HEK293 (cell line): ENCODE measurements at regions of chr11 and their contacts with region 1.

Region 1: DNA sequence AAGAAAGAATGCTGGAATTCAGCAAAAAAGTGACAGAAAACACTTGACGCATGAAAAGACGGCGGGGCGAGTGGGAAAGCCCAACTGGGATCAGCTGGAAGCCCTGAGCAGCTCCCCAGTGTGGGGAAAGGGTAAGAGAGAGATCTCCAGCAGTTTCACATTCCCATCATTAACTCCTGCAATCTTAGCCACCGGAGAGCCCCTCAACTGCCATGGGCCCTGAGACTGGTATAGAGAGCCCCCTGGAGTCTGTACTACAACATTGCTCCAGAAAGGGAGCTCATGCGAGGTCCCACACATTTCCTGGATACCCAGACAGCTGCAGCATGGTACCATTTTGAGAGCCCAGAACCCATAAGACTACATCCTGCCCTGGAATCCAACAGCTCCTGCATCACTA is 31.1 kb downstream of the MRGPRX4 start:
- H3K4me3 ChIP-seq: no peak overlapping the region
- H3K27ac ChIP-seq: no peak overlapping the region
- H3K4me1 ChIP-seq: no peaks in the 10 kb centered on the region
- CTCF ChIP-seq: no peak

Region 2: DNA sequence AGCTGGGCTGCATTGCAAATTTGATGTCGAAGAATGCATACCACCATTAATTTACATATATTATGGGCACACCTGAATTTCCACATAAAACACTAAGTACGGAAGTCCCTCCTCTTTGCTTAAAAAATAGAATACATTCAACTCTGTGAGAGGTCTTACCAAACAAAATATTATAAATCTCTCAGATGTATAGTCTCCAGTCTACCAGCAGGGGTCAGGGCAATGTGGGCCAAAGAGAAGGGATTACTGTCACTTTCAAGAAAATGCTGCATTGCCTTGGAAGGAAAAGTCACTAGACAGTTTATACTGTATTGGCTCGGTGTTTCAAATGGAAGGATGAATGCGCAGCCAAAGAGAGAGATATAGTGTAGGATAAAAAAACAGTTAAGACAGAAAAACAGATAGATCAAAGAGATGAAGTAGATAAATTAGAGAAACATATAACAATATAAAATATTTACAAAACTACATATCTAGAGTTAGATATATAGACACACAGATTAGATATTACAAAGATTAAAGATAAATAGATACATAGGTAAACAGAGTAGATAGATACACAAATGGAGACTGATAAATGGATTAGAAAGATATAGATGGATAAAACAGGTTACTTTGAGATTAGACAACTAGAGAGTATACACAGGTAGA is 211.8 kb before region 1 on chr11:
- CTCF ChIA-PET with region 1: interaction called, 12 read pairs
- POLR2A ChIA-PET with region 1: no interaction called
- H3K4me3 ChIP-seq: no peak overlapping the region
- H3K27ac ChIP-seq: no peak overlapping the region
- H3K4me1 ChIP-seq: no peaks in the 10 kb centered on the region
- CTCF ChIP-seq: 0 out of 2 replicates have a peak, but pooled peaks have one; percentile 27

Region 3: DNA sequence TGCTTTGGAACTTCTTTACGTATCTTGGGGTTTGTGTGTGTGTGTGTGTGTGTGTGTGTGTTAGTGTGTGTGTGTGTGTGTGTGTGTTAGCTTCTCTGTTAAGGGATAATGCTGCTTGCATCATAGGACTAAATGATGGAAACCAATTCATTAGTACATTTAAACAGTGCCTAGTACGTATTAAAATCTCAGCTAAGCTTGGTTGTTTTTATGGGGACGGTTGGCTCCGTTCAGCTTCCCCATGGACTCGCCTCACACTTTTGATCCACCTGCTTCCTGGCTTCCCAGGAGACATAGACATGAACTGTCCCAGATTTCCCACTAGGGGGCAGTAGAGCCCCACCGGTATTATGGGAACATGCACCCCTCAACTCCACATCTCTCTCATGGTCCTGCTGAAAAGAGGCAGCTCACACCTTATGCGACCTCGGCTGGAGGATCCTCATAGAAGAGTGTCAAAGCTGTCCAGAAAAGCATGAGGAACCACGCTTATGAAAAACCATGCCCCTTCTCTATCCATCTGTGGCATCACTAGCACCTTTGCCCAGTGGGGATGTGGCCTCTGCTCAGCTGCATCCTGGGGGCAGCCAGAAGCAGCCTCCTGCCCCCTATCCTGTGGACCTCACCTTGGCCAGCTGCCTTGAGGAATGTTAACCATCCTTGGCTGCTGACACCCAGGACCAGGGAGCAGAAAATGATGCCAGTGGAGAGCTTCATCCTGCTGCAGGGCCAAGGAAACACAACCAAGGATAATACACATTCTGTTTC is 88.2 kb before region 1 on chr11:
- CTCF ChIA-PET with region 1: interaction called, 21 read pairs
- POLR2A ChIA-PET with region 1: no interaction called
- H3K4me3 ChIP-seq: no peak overlapping the region
- H3K27ac ChIP-seq: no peak overlapping the region
- H3K4me1 ChIP-seq: no peaks in the 10 kb centered on the region
- CTCF ChIP-seq: peak; percentile 26; the same call in 1 of the 2 replicates

Region 4: GRCh38 chr11:18171377-18172000 is 32.2 kb before region 1 on chr11:
- CTCF ChIA-PET with region 1: interaction called, 11 read pairs
- POLR2A ChIA-PET with region 1: no interaction called
- H3K4me3 ChIP-seq: no peak overlapping the region
- H3K27ac ChIP-seq: no peak overlapping the region
- H3K4me1 ChIP-seq: no peaks in the 10 kb centered on the region
- CTCF ChIP-seq: 0 out of 2 replicates have a peak, but pooled peaks have one; percentile 26

Region 5: DNA sequence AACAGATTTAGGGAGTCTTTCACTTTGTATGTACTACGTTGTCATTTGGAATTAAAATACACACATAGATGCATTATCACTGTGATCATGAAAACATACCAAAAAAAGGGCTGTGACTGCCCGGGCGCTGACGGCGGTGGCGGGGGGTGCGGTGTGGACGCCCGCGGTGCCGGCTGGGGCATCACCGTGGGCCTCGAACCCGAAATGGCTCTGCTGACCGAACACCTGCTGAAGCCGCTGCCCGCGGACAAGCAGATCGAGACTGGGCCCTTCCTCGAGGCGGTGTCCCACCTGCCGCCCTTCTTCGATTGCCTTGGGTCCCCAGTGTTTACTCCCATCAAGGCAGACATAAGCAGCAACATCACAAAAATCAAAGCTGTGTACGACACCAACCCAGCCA is 14.9 kb before region 1 on chr11:
- CTCF ChIA-PET with region 1: interaction called, 10 read pairs
- POLR2A ChIA-PET with region 1: no interaction called
- H3K4me3 ChIP-seq: no peak overlapping the region
- H3K27ac ChIP-seq: no peak overlapping the region
- H3K4me1 ChIP-seq: no peaks in the 10 kb centered on the region
- CTCF ChIP-seq: no peak